ENCODE measurements at regions of chr20 and their contacts with region 1.

Region 1: GRCh38 chr20:46406199-46406985 is at the start of gene ELMO2:
- DNase-seq: peak; percentile 99
- H3K4me3 ChIP-seq: peak within 1 kb of the TSS; percentile 69 to 95
- H3K27ac ChIP-seq: peak within 1 kb of the TSS; percentile 84 to 98
- H3K4me1 ChIP-seq: peaks cover 4 to 58% (median 40%) of the 10 kb centered on the region in 4 donors
- H3K27me3 ChIP-seq: no peaks in the 10 kb centered on the region
- CTCF ChIP-seq: peak; percentile 21 to 35

Region 2: DNA sequence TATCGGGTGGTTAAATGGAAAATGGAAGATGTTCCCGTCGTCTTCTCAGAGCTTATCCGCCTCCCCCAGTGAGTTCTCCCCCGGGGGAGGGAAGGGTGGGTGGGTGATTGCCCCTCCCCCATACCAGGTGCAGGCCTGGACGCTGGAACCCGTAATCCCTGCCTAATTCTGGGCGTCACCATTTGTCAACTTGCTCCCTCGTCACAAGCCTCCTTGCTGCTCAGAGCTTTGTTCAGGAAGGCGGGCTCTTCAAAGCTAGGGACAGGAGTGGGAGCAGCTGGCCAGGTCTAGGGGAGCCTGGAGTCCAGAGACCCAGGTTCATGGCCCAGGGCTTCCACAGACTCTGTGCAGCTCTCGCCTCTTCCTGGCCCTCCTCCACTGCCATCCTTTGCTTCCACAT is 123.7 kb before region 1 on chr20:
- intact Hi-C with region 1: no loop called
- DNase-seq: no peak
- H3K4me3 ChIP-seq: no peak overlapping the region
- H3K27ac ChIP-seq: no peak overlapping the region
- H3K4me1 ChIP-seq: no peaks in the 10 kb centered on the region
- H3K27me3 ChIP-seq: peaks cover 0 to 81% of the 10 kb centered on the region in 2 donors
- CTCF ChIP-seq: no peak

Region 3: GRCh38 chr20:46316984-46317684 is 89.3 kb before region 1 on chr20:
- intact Hi-C with region 1: no loop called
- DNase-seq: no peak
- H3K4me3 ChIP-seq: no peak overlapping the region
- H3K27ac ChIP-seq: no peak overlapping the region
- H3K4me1 ChIP-seq: peaks cover 0 to 8% (median 3%) of the 10 kb centered on the region in 4 donors
- H3K27me3 ChIP-seq: peaks cover 0 to 91% of the 10 kb centered on the region in 2 donors
- CTCF ChIP-seq: no peak

Region 4: GRCh38 chr20:46363800-46364634 is 42.4 kb before region 1 on chr20:
- intact Hi-C with region 1: loop called (anchors 2 kb)
- DNase-seq: peak; percentile 86 to 91
- H3K4me3 ChIP-seq: peak overlapping the region; percentile 76 to 94
- H3K27ac ChIP-seq: peak overlapping the region; percentile 90 to 97
- H3K4me1 ChIP-seq: peaks cover 0 to 55% (median 33%) of the 10 kb centered on the region in 4 donors
- H3K27me3 ChIP-seq: no peaks in the 10 kb centered on the region
- CTCF ChIP-seq: no peak

Region 5: GRCh38 chr20:46509523-46509922 is 103.1 kb after region 1 on chr20:
- intact Hi-C with region 1: no loop called
- DNase-seq: no peak
- H3K4me3 ChIP-seq: no peak overlapping the region
- H3K27ac ChIP-seq: no peak overlapping the region
- H3K4me1 ChIP-seq: peaks cover 0 to 4% (median 0%) of the 10 kb centered on the region in 4 donors
- H3K27me3 ChIP-seq: no peaks in the 10 kb centered on the region
- CTCF ChIP-seq: no peak